Sigmoid colon (tissue), 7 donors: ENCODE measurements at regions of chr15 and their contacts with region 1.

Region 1: GRCh38 chr15:40338041-40338657 is 2.6 kb downstream of the CCDC9B start:
- DNase-seq: peak; percentile 94
- H3K4me3 ChIP-seq: peak overlapping the region in 3 of 4 donors; percentile 59 to 66 (median 64)
- H3K27ac ChIP-seq: peak overlapping the region; percentile 97 to 99 (median 99)
- H3K4me1 ChIP-seq: peaks cover 0 to 100% (median 99%) of the 10 kb centered on the region in 4 donors
- H3K27me3 ChIP-seq: no peaks in the 10 kb centered on the region
- CTCF ChIP-seq: peak in 3 of 4 experiments; percentile 49 to 62 (median 53)
- EP300 ChIP-seq: no peak
- POLR2A ChIP-seq: no peak

Region 2: DNA sequence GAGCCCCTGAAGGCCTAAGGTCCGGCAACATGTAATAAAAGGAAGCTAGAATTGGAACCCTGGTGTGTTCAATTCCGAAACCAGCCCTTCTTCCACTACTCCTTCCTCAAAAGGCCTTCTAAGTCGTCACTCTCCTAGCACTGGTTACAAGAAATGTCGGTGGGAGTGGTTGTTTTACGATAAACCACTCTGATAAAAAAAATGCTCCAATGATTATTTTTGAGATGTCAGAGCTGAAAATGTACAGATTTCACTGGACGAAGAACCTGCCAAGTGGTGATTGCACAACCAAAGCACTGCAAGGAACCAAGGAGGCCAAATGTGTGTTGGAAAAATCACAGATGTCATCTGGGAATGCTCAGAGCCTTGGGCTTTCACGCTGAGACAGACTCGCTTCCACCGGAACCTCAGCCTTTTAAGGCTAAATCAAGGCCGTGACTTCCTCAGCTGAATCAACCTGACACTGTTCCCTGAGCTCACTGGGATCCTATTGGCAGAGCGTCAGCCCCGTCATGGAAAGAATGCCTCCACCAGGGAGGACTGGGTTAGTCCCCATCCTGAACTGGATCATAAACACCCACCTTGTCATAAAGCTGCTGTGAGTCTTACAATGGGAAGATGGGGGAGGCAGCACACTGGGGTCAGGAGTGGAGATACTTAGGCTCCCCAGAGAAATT is 865.4 kb before region 1 on chr15:
- intact Hi-C with region 1: loop called (anchors 10 kb)
- DNase-seq: peak; percentile 99
- H3K4me3 ChIP-seq: no peak overlapping the region
- H3K27ac ChIP-seq: peak overlapping the region; percentile 79 to 95 (median 85)
- H3K4me1 ChIP-seq: peaks cover 0 to 46% (median 30%) of the 10 kb centered on the region in 4 donors
- H3K27me3 ChIP-seq: no peaks in the 10 kb centered on the region
- CTCF ChIP-seq: no peak
- EP300 ChIP-seq: peak; percentile 95 to 99 (median 98)
- POLR2A ChIP-seq: no peak

Region 3: DNA sequence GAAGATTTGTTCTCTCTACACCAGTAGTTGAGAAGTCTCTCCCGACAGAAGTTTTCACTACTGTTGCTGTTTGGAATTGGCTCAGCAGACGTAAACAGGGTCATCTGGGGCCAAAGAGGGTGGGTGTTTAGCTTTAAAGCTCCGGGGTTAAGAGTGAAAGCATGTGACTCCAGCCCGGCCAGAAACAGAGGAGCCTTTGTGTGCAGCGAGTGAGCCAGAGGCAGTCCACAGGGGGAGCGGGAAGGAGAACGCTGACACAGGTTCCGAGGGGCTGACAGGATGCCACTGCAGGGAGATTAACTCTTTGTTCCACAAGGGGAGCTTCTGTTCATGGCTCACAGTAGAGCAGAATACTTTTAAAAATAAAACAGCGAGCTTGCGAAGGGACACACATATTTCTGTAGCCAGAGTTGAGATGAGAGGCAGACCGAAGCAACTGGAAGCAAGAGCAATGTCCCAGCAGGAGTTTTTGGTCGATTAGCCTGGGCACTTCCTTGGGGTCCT is 256.4 kb before region 1 on chr15:
- intact Hi-C with region 1: no loop called
- DNase-seq: peak; percentile 86
- H3K4me3 ChIP-seq: peak overlapping the region; percentile 8 to 38 (median 34)
- H3K27ac ChIP-seq: peak overlapping the region; percentile 67 to 81 (median 74)
- H3K4me1 ChIP-seq: peaks cover 0 to 40% (median 34%) of the 10 kb centered on the region in 4 donors
- H3K27me3 ChIP-seq: no peaks in the 10 kb centered on the region
- CTCF ChIP-seq: no peak
- EP300 ChIP-seq: peak in 2 of 4 donors; percentile 38 to 56
- POLR2A ChIP-seq: peak in 1 of 2 donors; percentile 59

Region 4: DNA sequence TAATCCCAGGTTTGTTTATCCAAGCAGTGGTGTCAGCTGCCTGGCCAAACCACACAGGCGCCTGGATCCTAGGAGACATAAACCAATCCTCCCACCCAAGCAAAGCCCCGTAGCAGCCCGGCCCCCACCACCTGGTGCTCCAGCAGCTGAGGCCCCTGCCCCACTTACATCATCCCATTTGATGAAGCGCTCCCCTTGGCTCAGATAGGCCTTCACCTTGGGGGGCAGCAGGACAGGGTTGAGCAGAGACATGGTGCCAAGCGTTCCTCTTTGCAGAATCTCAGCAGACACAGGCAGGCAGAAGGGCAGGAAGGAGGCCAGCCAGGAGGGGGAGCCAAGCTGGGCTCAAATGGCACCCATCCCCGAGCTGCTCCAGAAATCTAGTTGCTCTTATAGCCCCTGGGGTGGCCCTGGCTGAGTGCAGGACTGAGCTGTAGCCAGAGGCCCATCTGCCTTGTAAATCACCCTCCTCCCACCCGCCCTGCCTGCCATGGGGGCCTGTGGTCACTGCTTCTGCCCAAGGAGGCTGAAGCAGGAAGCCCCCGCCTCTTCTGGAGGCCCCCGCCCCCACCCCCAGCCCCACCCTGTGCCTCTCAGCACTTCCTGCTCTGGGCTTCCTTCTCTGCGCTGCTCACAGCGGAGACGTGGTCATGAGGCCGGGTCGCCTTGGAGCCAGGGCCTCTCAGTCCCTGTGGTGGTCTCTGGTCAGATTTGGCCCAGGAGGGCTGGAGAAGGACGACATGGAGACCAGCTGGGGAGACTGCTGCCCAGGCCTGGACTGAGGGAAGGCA is 30.5 kb before region 1 on chr15 and contains the start of gene PLCB2:
- intact Hi-C with region 1: no loop called
- DNase-seq: peak; percentile 69
- H3K4me3 ChIP-seq: peak within 1 kb of the TSS in 3 of 4 donors; percentile 7 to 36 (median 27)
- H3K27ac ChIP-seq: peak within 1 kb of the TSS; percentile 14 to 57 (median 48)
- H3K4me1 ChIP-seq: peaks cover 0 to 12% (median 4%) of the 10 kb centered on the region in 4 donors
- H3K27me3 ChIP-seq: no peaks in the 10 kb centered on the region
- CTCF ChIP-seq: no peak
- EP300 ChIP-seq: no peak
- POLR2A ChIP-seq: no peak
- total RNA-seq, gene PLCB2: 5.4 to 12.5 (median 9.4) TPM